H1 (cell line): ENCODE measurements at regions of chr7 and their contacts with region 1.

Region 1: DNA sequence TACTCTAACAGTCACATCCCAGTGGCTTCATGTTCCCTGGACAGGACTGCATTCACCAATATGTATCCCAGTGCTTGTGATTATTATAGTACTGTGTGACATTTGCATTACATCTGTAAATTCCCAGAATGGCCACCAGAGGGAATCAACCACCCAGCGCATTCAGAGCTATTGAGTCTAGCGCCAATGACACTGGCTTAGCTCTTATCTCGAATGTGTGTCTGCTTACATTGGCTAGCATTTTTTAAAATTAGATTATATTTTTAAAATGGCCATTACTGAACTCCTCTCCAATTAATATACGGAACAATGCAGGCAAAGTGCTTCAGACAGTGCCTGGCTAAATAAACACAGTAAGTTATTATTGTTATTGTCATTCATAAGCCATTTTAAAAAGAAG is 36.3 kb downstream of the TRIL start:
- DNase-seq: no peak
- H3K4me3 ChIP-seq: no peak overlapping the region
- H3K27ac ChIP-seq: no peak overlapping the region
- H3K4me1 ChIP-seq: peaks cover 0 to 4% (median 0%) of the 10 kb centered on the region in 4 experiments; a peak in 3 of 7 replicates
- H3K27me3 ChIP-seq: no peaks in the 10 kb centered on the region
- CTCF ChIP-seq: peak; percentile 29 to 88 (median 87)
- EP300 ChIP-seq: no peak
- POLR2A ChIP-seq: no peak
- RAD21 ChIP-seq: peak; percentile 75 to 85

Region 2: GRCh38 chr7:28882869-28883470 is 38.9 kb before region 1 on chr7:
- CTCF ChIA-PET with region 1: interaction called, 13 read pairs
- POLR2A ChIA-PET with region 1: no interaction called
- DNase-seq: no peak
- H3K4me3 ChIP-seq: no peak overlapping the region
- H3K27ac ChIP-seq: no peak overlapping the region
- H3K4me1 ChIP-seq: peaks cover 0 to 4% (median 0%) of the 10 kb centered on the region in 4 experiments; a peak in 1 of 7 replicates
- H3K27me3 ChIP-seq: no peaks in the 10 kb centered on the region
- CTCF ChIP-seq: no peak
- EP300 ChIP-seq: no peak
- POLR2A ChIP-seq: no peak
- RAD21 ChIP-seq: no peak

Region 3: DNA sequence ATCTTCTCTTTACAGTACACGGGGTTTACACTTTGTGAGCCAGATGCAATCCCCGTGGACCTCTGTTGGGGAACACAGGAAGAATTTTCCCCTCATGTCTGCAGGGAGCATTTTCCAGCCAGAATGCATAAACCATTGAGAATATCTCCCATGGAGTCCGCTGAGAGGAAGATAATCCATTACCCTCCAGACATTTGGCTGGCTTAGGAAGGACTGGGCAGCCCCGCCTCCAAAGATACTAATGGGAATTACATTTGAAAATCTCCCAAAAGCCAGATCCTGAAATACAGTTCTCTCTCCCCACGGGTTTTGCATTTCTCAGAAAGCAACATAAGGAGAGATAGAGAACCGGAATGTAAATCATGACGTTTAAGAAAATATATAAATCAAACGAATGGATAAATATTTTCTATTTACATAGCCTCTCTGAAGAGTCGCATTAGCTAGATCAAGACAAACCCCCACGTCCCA is 17.2 kb before region 1 on chr7:
- CTCF ChIA-PET with region 1: interaction called, 97 read pairs
- POLR2A ChIA-PET with region 1: no interaction called
- DNase-seq: no peak
- H3K4me3 ChIP-seq: no peak overlapping the region
- H3K27ac ChIP-seq: no peak overlapping the region
- H3K4me1 ChIP-seq: peaks cover 0 to 16% (median 3%) of the 10 kb centered on the region in 4 experiments; a peak in 2 of 7 replicates
- H3K27me3 ChIP-seq: no peaks in the 10 kb centered on the region
- CTCF ChIP-seq: no peak
- EP300 ChIP-seq: no peak
- POLR2A ChIP-seq: no peak
- RAD21 ChIP-seq: no peak

Region 4: DNA sequence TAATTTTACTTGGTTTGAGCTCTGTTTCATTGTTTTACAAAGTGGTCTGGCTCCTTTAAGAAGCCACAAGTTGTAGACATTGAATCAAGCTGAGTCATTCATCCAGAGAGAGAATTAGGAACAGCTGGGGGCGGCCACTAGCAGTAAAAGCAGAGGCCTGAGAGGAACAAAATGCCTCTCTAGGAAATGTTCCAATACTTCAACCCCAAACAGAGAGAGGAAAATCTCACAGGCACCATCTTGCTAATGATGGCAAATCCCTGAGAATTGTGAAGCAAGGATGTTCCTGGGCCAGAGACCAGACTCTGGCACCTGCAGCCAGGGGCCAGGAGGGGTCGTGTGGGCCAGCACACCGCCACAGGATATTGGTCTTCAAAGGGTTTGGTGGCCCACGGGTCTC is 62.8 kb after region 1 on chr7:
- CTCF ChIA-PET with region 1: interaction called, 19 read pairs
- POLR2A ChIA-PET with region 1: no interaction called
- DNase-seq: no peak
- H3K4me3 ChIP-seq: peak overlapping the region in 1 of 4 experiments; percentile 23; a peak in 1 of 8 replicates
- H3K27ac ChIP-seq: peak overlapping the region; percentile 32; the same call in 1 of the 2 replicates
- H3K4me1 ChIP-seq: peaks cover 5 to 12% (median 10%) of the 10 kb centered on the region in 4 experiments
- H3K27me3 ChIP-seq: no peaks in the 10 kb centered on the region
- CTCF ChIP-seq: peak in 2 of 3 experiments; percentile 12 to 20; a peak in 2 of 4 replicates
- EP300 ChIP-seq: no peak
- POLR2A ChIP-seq: no peak
- RAD21 ChIP-seq: no peak; a peak in 1 of 4 replicates

Region 5: GRCh38 chr7:29119538-29120199 is 197.8 kb after region 1 on chr7:
- CTCF ChIA-PET with region 1: interaction called, 34 read pairs
- POLR2A ChIA-PET with region 1: no interaction called
- DNase-seq: no peak
- H3K4me3 ChIP-seq: no peak overlapping the region
- H3K27ac ChIP-seq: no peak overlapping the region
- H3K4me1 ChIP-seq: peaks cover 0 to 3% (median under 1%) of the 10 kb centered on the region in 4 experiments; a peak in 2 of 7 replicates
- H3K27me3 ChIP-seq: no peaks in the 10 kb centered on the region
- CTCF ChIP-seq: no peak
- EP300 ChIP-seq: no peak
- POLR2A ChIP-seq: no peak
- RAD21 ChIP-seq: no peak